ENCODE measurements at regions of chr11 and their contacts with region 1.

Region 1: DNA sequence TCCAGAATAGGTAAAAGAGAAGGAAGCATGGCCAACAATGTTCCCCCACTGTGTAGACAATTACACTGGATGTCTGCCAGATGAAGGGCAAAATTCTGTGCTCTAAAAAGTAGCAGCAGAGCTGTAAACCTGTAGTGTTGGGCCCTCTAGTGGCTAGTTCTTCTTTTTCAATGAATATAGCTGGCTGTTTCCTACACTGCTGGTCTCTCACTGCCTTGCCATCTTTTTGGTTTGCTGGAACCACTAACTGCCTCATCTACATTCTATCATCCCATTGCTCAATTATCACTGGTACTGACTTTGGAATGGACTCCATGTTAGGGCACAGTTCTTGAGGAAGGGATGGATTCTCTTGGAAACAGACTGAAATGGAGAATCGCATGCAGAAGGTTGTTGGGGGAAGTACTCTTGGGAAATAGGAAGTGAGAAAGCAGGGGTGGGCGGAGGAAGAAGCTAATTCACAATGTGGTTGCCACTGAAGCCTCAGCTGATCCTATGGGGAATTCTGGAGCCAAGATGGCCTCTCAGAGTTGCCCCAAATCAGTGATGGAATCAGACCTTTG is 17.9 kb downstream of the KCNE3 start:
- DNase-seq: peak; percentile 81
- ATAC-seq: peak; percentile 88
- H3K4me3 ChIP-seq: no peak overlapping the region
- H3K27ac ChIP-seq: no peak overlapping the region
- H3K4me1 ChIP-seq: no peaks in the 10 kb centered on the region
- H3K27me3 ChIP-seq: peaks cover 8% of the 10 kb centered on the region
- CTCF ChIP-seq: peak; percentile 89
- POLR2A ChIP-seq: no peak
- RAD21 ChIP-seq: peak; percentile 94

Region 2: DNA sequence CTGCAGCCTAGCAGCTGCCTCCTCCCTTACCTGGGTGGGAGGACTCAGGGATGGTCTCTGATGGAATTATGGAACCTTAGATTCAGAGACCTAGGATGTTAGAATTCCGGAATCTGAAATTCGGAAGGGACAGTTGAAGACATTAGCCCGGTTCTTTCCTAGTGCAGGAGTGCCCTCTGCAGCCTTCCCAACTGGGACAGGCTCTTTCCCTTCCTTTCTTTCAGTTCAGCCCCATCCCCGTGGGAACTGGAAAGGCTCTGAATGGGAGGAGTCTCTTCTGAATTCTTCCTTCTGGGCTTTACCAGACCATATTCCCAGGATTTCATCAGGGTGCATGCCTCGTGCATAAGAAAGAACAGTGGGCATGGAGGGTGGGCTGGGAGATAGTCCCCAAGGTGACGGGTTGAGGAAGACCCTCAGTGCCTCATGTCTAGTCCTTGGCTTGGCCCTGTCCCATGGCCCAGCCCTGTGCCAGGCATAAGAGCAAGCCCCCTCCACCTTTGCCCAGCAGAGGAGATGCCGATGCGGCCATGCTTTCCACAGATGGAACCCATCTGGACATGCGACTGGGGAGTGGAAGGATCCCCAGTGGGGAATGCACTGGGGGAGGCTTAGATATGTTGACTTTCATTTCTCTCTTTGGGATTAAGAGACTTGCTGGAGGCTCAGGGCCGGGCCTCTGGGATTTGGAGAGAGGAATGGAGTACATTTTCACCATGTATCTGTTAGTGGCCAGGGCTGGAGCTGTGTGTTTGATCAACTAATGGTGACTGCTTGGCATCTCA is 484.2 kb before region 1 on chr11:
- CTCF ChIA-PET with region 1: no interaction called
- POLR2A ChIA-PET with region 1: no interaction called
- dilution Hi-C with region 1: no loop called
- in situ Hi-C with region 1: loop called (anchors 10 kb)
- intact Hi-C with region 1: loop called (anchors 1 kb)
- DNase-seq: no peak
- ATAC-seq: 0 out of 2 replicates have a peak, but pooled peaks have one; percentile 6
- H3K4me3 ChIP-seq: no peak overlapping the region
- H3K27ac ChIP-seq: no peak overlapping the region
- H3K4me1 ChIP-seq: no peaks in the 10 kb centered on the region
- H3K27me3 ChIP-seq: no peaks in the 10 kb centered on the region
- CTCF ChIP-seq: no peak
- POLR2A ChIP-seq: no peak
- RAD21 ChIP-seq: no peak

Region 3: DNA sequence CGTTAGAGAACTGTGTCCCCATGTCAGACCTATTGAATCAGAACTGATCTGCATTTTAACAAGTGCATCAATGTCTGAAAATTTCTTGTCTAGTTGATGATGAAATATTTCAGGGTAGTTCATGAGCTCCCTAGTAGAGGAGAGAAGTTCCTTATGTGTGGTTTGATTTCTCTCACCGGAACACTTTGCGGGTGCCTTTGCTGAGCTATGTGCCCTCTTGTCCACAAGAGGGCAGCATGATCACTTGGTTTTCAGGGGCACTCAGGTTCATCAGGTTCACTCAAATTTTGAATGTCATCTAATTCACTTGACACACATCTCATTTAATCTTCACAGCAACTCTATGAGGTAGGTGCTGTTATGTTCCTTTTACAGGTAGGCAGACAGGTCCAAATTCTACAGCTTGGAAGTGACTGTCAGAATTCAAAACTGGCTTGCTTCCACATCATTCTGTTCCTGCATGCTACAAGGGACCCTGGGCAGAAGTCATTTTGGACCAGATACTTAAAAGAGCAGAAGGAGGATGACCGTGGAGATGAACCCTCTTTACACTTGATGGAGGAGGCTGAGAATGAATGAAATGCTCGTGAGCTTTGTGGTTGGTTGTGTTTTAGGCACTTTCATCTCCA is 193.6 kb before region 1 on chr11:
- CTCF ChIA-PET with region 1: interaction called, 19 read pairs
- POLR2A ChIA-PET with region 1: interaction called, 3 read pairs
- dilution Hi-C with region 1: no loop called
- in situ Hi-C with region 1: loop called (anchors 5 kb)
- intact Hi-C with region 1: loop called (anchors 1 kb)
- DNase-seq: peak; percentile 63
- ATAC-seq: peak; percentile 50; the same call in 1 of the 2 replicates
- H3K4me3 ChIP-seq: no peak overlapping the region
- H3K27ac ChIP-seq: no peak overlapping the region
- H3K4me1 ChIP-seq: peaks cover 10% of the 10 kb centered on the region
- H3K27me3 ChIP-seq: no peaks in the 10 kb centered on the region
- CTCF ChIP-seq: peak; percentile 93
- POLR2A ChIP-seq: peak; percentile 60
- RAD21 ChIP-seq: peak; percentile 96

Region 4: DNA sequence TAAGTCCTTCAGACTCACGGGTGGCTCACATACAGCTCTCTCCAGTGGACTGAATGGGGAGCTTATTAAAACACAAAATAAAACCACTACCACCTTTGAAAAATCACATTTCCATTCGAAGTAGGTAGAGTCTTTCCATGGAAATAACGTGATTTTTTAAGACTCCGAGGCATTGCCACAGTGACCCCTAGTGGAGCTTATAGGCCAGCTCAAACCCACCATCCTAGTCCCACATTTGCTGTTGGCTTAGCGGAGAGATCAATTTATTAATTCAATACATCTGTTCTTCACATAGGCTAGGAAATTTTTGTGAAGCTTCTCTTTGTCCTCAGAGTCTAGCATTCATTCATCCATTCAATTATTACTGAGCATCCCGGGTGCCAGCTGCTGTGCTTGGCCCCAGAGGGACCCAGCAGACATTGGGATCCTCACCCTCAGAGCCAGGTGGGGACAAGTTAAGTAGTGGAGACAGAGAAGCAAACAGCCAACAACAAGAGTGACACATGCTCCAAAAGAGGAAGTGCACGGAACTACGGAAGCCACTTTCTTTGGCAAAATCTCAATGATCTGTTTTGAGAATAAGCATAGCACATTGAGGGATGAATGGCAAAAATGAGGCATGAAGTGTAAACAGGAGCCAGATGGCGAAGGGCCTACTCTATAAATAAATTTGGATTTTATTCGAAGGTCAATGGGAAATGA is 127.8 kb before region 1 on chr11:
- CTCF ChIA-PET with region 1: no interaction called
- POLR2A ChIA-PET with region 1: no interaction called
- dilution Hi-C with region 1: no loop called
- in situ Hi-C with region 1: no loop called
- intact Hi-C with region 1: loop called (anchors 10 kb)
- DNase-seq: peak; percentile 65
- ATAC-seq: no peak
- H3K4me3 ChIP-seq: no peak overlapping the region
- H3K27ac ChIP-seq: no peak overlapping the region
- H3K4me1 ChIP-seq: peaks cover 22% of the 10 kb centered on the region
- H3K27me3 ChIP-seq: no peaks in the 10 kb centered on the region
- CTCF ChIP-seq: peak; percentile 55
- POLR2A ChIP-seq: no peak
- RAD21 ChIP-seq: peak; percentile 60

Region 5: DNA sequence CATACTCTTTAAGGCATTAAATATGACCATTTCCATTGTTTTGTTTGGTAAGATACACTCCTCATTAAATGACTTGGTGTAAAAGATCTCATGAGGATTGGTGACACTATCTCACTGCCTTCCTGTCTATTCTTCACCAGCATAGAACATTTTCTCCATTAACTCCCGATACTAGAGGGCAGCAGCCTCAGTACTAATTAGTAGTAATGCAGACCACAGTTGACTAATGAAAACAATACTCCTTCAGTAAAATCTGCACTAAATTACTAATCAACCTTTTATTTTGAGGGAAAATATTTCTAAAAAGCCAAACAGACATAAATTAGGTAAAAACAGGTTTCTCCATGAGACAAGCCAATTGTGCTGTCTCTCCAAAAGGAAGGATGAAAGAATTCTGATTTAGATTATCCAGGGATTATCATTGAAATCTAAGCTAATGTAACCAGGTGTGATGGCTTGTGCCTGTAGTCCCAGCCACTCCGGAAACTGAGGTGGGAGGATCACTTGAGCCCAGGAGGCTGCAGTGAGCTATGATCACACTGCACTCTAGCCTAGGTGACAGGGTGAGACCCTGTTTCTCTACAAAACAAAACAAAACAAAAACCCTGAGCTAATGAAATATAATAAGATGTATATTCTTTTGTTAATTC is 60.6 kb before region 1 on chr11:
- CTCF ChIA-PET with region 1: interaction called, 7 read pairs
- POLR2A ChIA-PET with region 1: no interaction called
- dilution Hi-C with region 1: no loop called
- in situ Hi-C with region 1: no loop called
- intact Hi-C with region 1: loop called (anchors 1 kb)
- DNase-seq: peak; percentile 55
- ATAC-seq: peak; percentile 74
- H3K4me3 ChIP-seq: no peak overlapping the region
- H3K27ac ChIP-seq: no peak overlapping the region
- H3K4me1 ChIP-seq: peaks cover 2% of the 10 kb centered on the region; the same call in 1 of the 2 replicates
- H3K27me3 ChIP-seq: no peaks in the 10 kb centered on the region
- CTCF ChIP-seq: peak; percentile 73
- POLR2A ChIP-seq: no peak
- RAD21 ChIP-seq: peak; percentile 70

Region 6: GRCh38 chr11:74570266-74571061 is 121.0 kb after region 1 on chr11:
- CTCF ChIA-PET with region 1: interaction called, 21 read pairs
- POLR2A ChIA-PET with region 1: no interaction called
- dilution Hi-C with region 1: no loop called
- in situ Hi-C with region 1: loop called (anchors 5 kb)
- intact Hi-C with region 1: loop called (anchors 1 kb)
- DNase-seq: peak; percentile 53
- ATAC-seq: peak; percentile 89
- H3K4me3 ChIP-seq: no peak overlapping the region
- H3K27ac ChIP-seq: no peak overlapping the region
- H3K4me1 ChIP-seq: no peaks in the 10 kb centered on the region
- H3K27me3 ChIP-seq: peaks cover 16% of the 10 kb centered on the region
- CTCF ChIP-seq: peak; percentile 69
- POLR2A ChIP-seq: 0 out of 2 replicates have a peak, but pooled peaks have one; percentile 29
- RAD21 ChIP-seq: peak; percentile 86

Region 7: GRCh38 chr11:74739546-74740270 is 290.3 kb after region 1 on chr11:
- CTCF ChIA-PET with region 1: interaction called, 4 read pairs
- POLR2A ChIA-PET with region 1: no interaction called
- dilution Hi-C with region 1: no loop called
- in situ Hi-C with region 1: no loop called
- intact Hi-C with region 1: loop called (anchors 1 kb)
- DNase-seq: peak; percentile 73
- ATAC-seq: peak; percentile 93
- H3K4me3 ChIP-seq: no peak overlapping the region
- H3K27ac ChIP-seq: no peak overlapping the region
- H3K4me1 ChIP-seq: peaks cover 8% of the 10 kb centered on the region
- H3K27me3 ChIP-seq: peaks cover 4% of the 10 kb centered on the region; the same call in 1 of the 2 replicates
- CTCF ChIP-seq: peak; percentile 91
- POLR2A ChIP-seq: no peak
- RAD21 ChIP-seq: peak; percentile 90